Activated B cell treated with CpG ODN at 0.5 μM for 24 hours (primary cell): ENCODE measurements at regions of chr12 and their contacts with region 1.

Region 1: DNA sequence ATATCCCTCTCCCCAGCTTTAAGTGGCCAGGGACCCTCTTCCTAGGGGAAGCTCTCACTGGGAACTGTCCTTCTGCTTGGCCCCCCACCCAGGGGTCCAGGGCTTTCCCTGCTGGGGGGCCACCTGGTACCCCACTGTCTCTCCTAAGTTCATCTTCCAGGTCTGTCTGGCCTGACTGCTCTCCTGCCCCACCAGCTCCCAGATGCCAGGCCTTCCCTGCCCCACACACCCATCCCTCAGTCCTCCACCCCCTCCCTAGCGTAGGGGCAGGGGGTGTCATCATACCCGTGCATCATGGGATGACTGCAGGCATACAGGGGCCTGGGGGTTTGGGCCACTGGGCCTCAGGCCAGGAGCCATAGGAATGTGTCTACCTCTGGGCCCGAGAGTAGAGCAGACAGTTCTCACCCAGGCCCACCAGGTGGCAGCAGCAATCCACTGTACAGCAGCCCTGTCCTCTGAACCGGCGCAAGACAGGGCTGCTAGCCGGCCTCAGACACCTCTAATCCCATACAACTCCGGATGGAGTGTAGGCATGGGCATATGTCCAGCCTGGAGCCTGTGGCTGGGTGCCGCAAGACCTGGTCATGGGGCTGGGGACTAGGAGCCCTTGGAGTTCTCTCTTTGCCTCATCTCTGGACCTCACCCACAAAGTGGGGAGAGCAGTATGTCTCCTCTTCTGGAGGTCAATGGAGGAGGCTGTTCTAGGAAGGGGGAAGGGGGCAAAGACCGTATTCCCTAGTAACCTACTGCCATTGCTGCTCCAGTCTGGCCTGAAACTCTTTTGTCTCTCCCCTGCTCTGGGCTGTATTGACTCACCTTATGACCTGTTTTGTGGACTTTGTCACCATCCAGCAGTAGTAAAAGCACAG is 10.0 kb upstream of the SMARCD1 start:
- DNase-seq: peak; percentile 81
- ATAC-seq: peak; percentile 98
- H3K4me3 Mint-ChIP-seq: no peak overlapping the region
- H3K27ac Mint-ChIP-seq: no peak overlapping the region
- H3K4me1 Mint-ChIP-seq: peaks cover 4% of the 10 kb centered on the region
- H3K27me3 Mint-ChIP-seq: peaks cover 15% of the 10 kb centered on the region
- CTCF ChIP-seq: peak; percentile 53

Region 2: GRCh38 chr12:49776413-49776812 is 298.8 kb before region 1 on chr12:
- CTCF ChIA-PET with region 1: no interaction called
- POLR2A ChIA-PET with region 1: no interaction called
- intact Hi-C with region 1: loop called (anchors 5 kb)
- DNase-seq: no peak
- ATAC-seq: peak; percentile 85
- H3K4me3 Mint-ChIP-seq: no peak overlapping the region
- H3K27ac Mint-ChIP-seq: no peak overlapping the region
- H3K4me1 Mint-ChIP-seq: peaks cover 13% of the 10 kb centered on the region
- H3K27me3 Mint-ChIP-seq: peaks cover 17% of the 10 kb centered on the region
- CTCF ChIP-seq: no peak

Region 3: GRCh38 chr12:50038336-50038735 is 36.8 kb before region 1 on chr12:
- CTCF ChIA-PET with region 1: interaction called, 16 read pairs
- POLR2A ChIA-PET with region 1: no interaction called
- intact Hi-C with region 1: loop called (anchors 5 kb)
- DNase-seq: no peak
- ATAC-seq: no peak
- H3K4me3 Mint-ChIP-seq: no peak overlapping the region
- H3K27ac Mint-ChIP-seq: no peak overlapping the region
- H3K4me1 Mint-ChIP-seq: peaks cover 4% of the 10 kb centered on the region
- H3K27me3 Mint-ChIP-seq: peaks cover 2% of the 10 kb centered on the region
- CTCF ChIP-seq: no peak

Region 4: DNA sequence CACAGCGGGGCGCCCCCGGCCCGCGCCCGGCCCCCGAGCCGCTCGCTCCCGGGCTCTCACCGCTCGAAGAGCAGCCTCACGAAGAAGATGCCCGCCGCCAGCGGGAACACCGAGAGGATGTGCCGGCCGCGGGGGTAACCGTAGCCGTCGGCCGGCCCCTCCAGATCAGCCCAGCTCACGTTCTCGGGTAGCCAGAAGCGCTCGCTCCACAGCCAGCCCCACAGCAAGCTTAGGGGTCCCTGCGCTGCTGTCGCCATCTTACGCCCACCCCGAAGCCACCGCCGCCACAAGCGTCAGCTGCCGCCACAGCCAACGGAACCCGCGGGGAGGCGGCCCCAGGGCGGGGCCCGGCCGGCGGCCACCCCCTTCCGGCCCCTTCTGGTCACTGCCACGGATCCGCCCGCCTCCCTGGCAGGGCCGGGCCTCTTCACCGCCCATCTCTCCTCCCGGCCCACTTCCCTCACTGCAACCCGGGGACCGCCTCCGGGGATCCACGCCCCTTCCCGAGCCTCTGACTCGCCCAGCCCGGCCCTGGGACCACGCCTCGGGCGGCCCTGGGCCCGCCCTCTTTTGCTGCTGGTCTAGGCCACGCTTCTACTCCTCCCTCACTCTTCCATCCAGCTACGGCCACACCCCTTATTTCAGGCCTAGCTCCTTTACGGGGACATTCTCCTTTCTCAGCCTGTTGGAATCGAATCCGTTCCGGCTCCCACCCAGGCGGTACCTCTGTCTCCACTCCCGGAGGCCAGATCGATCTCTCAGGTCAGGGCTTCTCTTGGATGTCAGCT is 92.1 kb after region 1 on chr12 and contains the start of gene CERS5:
- CTCF ChIA-PET with region 1: interaction called, 9 read pairs
- POLR2A ChIA-PET with region 1: no interaction called
- intact Hi-C with region 1: loop called (anchors 2 kb)
- DNase-seq: peak; percentile 95
- ATAC-seq: peak; percentile 98
- H3K4me3 Mint-ChIP-seq: peak within 1 kb of the TSS; percentile 92
- H3K27ac Mint-ChIP-seq: peak within 1 kb of the TSS; percentile 90
- H3K4me1 Mint-ChIP-seq: peaks cover 25% of the 10 kb centered on the region
- H3K27me3 Mint-ChIP-seq: no peaks in the 10 kb centered on the region
- CTCF ChIP-seq: no peak
- total RNA-seq, gene CERS5: 44.3 and 64.9 TPM in 2 replicates

Region 5: GRCh38 chr12:50220363-50220995 is 145.3 kb after region 1 on chr12:
- CTCF ChIA-PET with region 1: no interaction called
- POLR2A ChIA-PET with region 1: no interaction called
- intact Hi-C with region 1: no loop called
- DNase-seq: no peak
- ATAC-seq: no peak
- H3K4me3 Mint-ChIP-seq: no peak overlapping the region
- H3K27ac Mint-ChIP-seq: peak overlapping the region; percentile 24
- H3K4me1 Mint-ChIP-seq: peaks cover 18% of the 10 kb centered on the region
- H3K27me3 Mint-ChIP-seq: no peaks in the 10 kb centered on the region
- CTCF ChIP-seq: no peak

Region 6: GRCh38 chr12:50314629-50315312 is 239.6 kb after region 1 on chr12:
- CTCF ChIA-PET with region 1: interaction called, 6 read pairs
- POLR2A ChIA-PET with region 1: no interaction called
- intact Hi-C with region 1: loop called (anchors 1 kb)
- DNase-seq: no peak
- ATAC-seq: no peak
- H3K4me3 Mint-ChIP-seq: no peak overlapping the region
- H3K27ac Mint-ChIP-seq: no peak overlapping the region
- H3K4me1 Mint-ChIP-seq: no peaks in the 10 kb centered on the region
- H3K27me3 Mint-ChIP-seq: no peaks in the 10 kb centered on the region
- CTCF ChIP-seq: no peak

Region 7: DNA sequence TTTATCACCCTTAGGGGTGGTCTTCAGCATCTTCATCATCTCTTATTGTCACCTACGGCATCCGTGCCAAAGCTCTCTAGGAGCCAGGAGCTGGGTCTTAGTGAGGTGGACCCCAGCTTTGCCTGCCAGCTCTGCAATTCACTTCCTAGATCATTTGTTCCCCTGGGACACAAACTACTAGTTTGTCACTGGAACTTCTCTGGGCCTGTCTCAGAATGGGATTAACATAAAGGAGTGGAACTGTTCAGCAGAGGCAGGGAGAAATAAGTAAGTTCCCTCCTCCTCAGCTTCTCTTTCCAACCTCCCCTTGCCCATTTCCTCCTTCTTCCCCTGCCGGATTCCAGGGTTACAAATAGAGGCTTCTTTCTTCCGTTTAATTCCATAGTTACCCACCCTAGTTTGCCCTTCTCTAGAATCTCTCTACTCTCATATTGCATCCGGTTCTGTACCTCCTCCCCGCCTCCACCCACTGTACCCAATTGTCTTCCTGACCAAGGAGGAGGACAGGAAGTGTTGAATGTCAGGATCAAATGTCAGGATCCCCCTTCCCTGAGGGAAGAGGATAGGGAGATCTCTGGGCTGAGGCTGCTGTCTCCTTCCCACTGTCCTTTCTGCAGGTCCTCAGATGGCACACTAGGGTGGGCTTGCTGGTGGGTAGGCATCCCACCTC is 350.6 kb after region 1 on chr12:
- CTCF ChIA-PET with region 1: no interaction called
- POLR2A ChIA-PET with region 1: no interaction called
- intact Hi-C with region 1: no loop called
- DNase-seq: no peak
- ATAC-seq: no peak
- H3K4me3 Mint-ChIP-seq: no peak overlapping the region
- H3K27ac Mint-ChIP-seq: peak overlapping the region; percentile 35
- H3K4me1 Mint-ChIP-seq: no peaks in the 10 kb centered on the region
- H3K27me3 Mint-ChIP-seq: no peaks in the 10 kb centered on the region
- CTCF ChIP-seq: no peak